ENCODE measurements at regions of chr5 and their contacts with region 1.

Region 1: DNA sequence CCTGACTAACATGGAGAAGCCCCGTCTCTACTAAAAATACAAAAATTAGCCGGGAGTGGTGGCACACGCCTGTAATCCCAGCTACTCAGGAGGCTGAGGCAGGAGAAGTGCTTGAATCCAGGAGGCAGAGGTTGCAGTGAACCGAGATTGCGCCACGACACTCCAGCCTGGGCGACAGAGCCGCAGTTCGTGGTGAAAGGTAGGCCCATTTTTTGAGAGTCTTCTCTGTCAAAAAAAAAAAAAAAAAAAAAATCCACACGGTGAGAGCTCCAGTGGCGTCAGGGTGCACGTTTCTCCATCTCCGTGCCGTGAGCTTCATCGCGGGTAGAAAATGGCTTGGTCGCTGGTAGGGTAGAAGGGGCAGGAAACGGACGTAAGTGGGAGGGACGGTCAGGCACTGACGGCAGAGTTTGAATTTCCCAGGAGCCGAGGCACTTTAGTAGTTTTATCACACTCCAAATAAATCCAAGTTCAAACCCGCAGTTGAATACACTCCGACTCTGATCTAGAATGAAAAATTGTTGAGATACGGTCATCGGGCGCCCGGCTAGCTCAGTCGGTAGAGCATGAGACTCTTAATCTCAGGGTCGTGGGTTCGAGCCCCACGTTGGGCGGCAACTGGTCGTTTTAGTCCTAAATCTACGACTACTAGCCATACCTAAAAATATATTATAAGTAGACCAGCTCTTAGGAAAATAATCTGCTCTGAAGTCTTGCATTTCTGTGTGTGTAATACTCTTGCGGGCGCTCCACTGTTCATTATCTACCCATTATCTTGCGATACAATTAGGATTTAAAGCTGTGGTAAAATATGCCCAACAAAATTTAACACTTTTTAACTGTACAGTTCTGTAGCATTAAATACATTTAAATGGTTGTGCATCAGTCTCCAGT is 2.5 kb upstream of the TRIM7 start:
- DNase-seq: peak; percentile 49 to 80 (median 77)
- H3K4me3 ChIP-seq: peak overlapping the region; percentile 69
- H3K4me3 Mint-ChIP-seq: peak overlapping the region; percentile 86 to 98 (median 91)
- H3K27ac ChIP-seq: peak overlapping the region; percentile 24
- H3K27ac Mint-ChIP-seq: peak overlapping the region; percentile 84 to 98 (median 94)
- H3K4me1 ChIP-seq: peaks cover 28% of the 10 kb centered on the region
- H3K4me1 Mint-ChIP-seq: peaks cover 30 to 38% (median 36%) of the 10 kb centered on the region in 3 donors
- H3K27me3 ChIP-seq: no peaks in the 10 kb centered on the region
- H3K27me3 Mint-ChIP-seq: peaks cover 6 to 24% of the 10 kb centered on the region in 2 donors

Region 2: GRCh38 chr5:181121659-181122561 is 85.6 kb before region 1 on chr5:
- CTCF ChIA-PET with region 1: no interaction called
- POLR2A ChIA-PET with region 1: no interaction called
- DNase-seq: no peak
- H3K4me3 ChIP-seq: no peak overlapping the region
- H3K4me3 Mint-ChIP-seq: no peak overlapping the region
- H3K27ac ChIP-seq: no peak overlapping the region
- H3K27ac Mint-ChIP-seq: no peak overlapping the region
- H3K4me1 ChIP-seq: no peaks in the 10 kb centered on the region
- H3K4me1 Mint-ChIP-seq: no peaks in the 10 kb centered on the region
- H3K27me3 ChIP-seq: peaks cover 5% of the 10 kb centered on the region
- H3K27me3 Mint-ChIP-seq: peaks cover 49 to 87% of the 10 kb centered on the region in 2 donors

Region 3: DNA sequence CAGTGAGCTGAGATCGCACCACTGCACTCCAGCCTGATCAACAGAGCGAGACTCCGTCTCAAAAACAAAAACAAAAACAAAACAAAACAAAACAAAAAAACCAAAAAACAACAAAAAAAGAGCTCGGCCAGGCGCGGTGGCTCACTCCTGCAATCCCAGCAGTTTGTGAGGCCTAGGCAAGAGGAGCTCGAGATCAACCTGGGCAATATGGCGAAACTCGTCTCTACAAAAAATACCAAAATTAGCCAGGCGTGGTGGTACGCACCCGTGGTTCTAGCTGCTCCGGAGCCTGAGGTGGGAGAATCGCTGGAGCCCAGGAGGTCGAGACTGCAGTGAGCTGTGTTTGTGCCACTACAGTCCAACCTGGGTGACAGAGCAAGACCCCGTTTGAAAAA is 22.6 kb before region 1 on chr5:
- CTCF ChIA-PET with region 1: interaction called, 164 read pairs
- POLR2A ChIA-PET with region 1: interaction called, 168 read pairs
- DNase-seq: no peak
- H3K4me3 ChIP-seq: no peak overlapping the region
- H3K4me3 Mint-ChIP-seq: peak overlapping the region; percentile 85 to 95 (median 91)
- H3K27ac ChIP-seq: peak overlapping the region; percentile 59
- H3K27ac Mint-ChIP-seq: peak overlapping the region in 6 of 8 donors; percentile 15 to 97 (median 90)
- H3K4me1 ChIP-seq: peaks cover 4% of the 10 kb centered on the region
- H3K4me1 Mint-ChIP-seq: peaks cover 43 to 58% (median 54%) of the 10 kb centered on the region in 3 donors
- H3K27me3 ChIP-seq: no peaks in the 10 kb centered on the region
- H3K27me3 Mint-ChIP-seq: peaks cover 0 to 26% of the 10 kb centered on the region in 2 donors

Region 4: DNA sequence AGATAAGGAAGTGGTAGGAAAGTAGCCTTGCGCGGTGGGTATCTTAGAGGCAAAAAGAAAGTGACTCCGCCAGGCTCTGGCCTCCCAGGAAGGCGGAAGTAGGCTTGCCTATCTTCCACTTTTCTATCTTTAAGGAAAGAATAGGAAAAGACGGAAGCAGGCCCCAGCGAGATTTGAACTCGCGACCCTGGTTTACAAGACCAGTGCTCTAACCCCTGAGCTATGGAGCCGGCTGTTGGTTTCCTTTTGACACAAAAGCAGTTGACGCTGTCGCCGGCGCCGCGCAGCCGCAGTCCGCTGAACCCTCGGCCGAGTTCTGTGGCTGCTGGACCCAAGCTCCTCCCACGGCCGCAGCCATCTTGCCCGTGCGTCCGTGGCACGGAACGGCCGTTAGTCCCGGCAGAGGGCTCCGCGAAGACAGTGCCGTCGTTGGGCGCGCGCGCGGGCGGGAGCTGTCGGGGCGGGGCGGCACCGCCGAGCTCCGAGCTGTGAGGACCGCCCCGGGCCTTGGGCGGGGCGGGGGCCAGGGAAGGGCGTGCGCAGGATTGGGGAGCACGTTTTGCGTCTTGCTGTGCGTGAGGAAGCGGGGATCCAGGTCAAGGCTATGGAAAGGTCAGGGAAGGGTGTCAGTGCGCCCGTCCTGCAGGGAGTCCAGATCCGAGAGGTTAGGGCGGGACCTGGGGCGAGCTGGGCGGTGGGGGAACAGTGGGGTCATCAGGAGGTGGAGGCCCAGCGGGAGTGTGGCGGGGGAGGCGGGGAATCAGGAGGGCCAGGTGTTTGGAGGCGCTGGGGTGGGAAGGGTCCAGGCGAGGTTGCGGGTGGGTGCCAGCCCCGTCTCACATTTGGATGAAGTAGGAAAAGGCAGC is 15.7 kb before region 1 on chr5:
- CTCF ChIA-PET with region 1: interaction called, 164 read pairs
- POLR2A ChIA-PET with region 1: interaction called, 168 read pairs
- DNase-seq: peak; percentile 90 to 97 (median 95)
- H3K4me3 ChIP-seq: peak overlapping the region; percentile 100
- H3K4me3 Mint-ChIP-seq: peak overlapping the region; percentile 94 to 100 (median 97)
- H3K27ac ChIP-seq: peak overlapping the region; percentile 83
- H3K27ac Mint-ChIP-seq: peak overlapping the region; percentile 93 to 100 (median 97)
- H3K4me1 ChIP-seq: peaks cover 6% of the 10 kb centered on the region
- H3K4me1 Mint-ChIP-seq: peaks cover 27 to 47% (median 35%) of the 10 kb centered on the region in 3 donors
- H3K27me3 ChIP-seq: no peaks in the 10 kb centered on the region
- H3K27me3 Mint-ChIP-seq: peaks cover 0 to 36% of the 10 kb centered on the region in 2 donors

Region 5: GRCh38 chr5:181243512-181244343 is 36.3 kb after region 1 on chr5 and contains the start of gene RACK1:
- CTCF ChIA-PET with region 1: interaction called, 3 read pairs
- POLR2A ChIA-PET with region 1: interaction called, 13 read pairs
- DNase-seq: peak; percentile 83 to 93 (median 87)
- H3K4me3 ChIP-seq: peak within 1 kb of the TSS; percentile 95
- H3K4me3 Mint-ChIP-seq: peak within 1 kb of the TSS; percentile 94 to 99 (median 97)
- H3K27ac ChIP-seq: peak within 1 kb of the TSS; percentile 96
- H3K27ac Mint-ChIP-seq: peak within 1 kb of the TSS; percentile 96 to 99 (median 98)
- H3K4me1 ChIP-seq: peaks cover 64% of the 10 kb centered on the region
- H3K4me1 Mint-ChIP-seq: peaks cover 68 to 76% (median 70%) of the 10 kb centered on the region in 3 donors
- H3K27me3 ChIP-seq: no peaks in the 10 kb centered on the region
- H3K27me3 Mint-ChIP-seq: peaks cover 0 to 2% of the 10 kb centered on the region in 2 donors
- total RNA-seq, gene RACK1: 2,341 to 2,398 TPM

Region 6: DNA sequence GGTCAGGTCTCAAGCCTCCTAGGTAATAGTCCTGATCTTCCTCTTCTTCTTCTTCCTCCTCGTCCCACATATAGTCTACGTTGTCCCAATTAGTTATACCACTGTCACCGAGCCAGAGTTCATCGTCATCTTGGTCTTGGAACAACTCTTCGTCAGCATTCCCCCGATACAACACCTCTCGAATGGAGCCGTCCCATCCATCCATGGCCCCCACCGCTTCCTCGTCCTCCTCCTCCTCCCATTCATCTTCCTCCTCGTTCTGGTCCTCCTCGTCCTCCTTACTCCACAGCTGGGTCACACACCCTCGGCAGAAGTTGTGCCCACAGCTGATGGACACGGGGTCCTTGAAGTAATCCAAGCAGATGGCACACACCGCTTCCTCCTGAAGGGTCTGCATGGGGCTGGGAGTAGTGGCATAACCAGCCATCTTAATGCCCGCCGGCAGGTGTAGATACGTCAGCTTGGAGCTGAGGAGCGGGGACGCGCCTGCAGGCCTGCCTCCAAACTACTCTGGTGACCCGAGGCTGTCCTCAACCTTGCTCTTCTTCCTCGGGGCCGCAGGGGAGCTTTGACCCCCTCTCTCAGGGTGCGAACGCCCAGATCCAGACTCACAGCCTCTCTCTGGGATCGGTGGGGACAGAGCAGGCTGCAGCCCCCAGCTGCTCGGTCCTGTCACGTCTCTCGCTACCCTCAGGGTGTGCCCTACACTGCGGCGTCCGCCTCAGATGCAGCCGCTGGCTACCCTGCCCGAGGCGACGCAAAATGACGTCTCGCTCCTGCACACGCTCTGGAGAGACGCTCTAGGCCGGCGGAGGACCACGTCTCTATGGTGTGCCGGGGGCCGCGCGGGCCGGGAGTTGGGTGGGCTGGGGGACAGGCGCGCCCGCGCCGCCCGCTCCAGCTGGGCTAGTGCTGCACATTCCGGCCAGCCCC is 53.2 kb after region 1 on chr5 and contains the start of gene TRIM52:
- CTCF ChIA-PET with region 1: interaction called, 17 read pairs
- POLR2A ChIA-PET with region 1: interaction called, 19 read pairs
- DNase-seq: peak; percentile 83 to 95 (median 91)
- H3K4me3 ChIP-seq: peak within 1 kb of the TSS; percentile 99
- H3K4me3 Mint-ChIP-seq: peak within 1 kb of the TSS; percentile 97 to 99 (median 98)
- H3K27ac ChIP-seq: peak within 1 kb of the TSS; percentile 99
- H3K27ac Mint-ChIP-seq: peak within 1 kb of the TSS; percentile 95 to 99 (median 98)
- H3K4me1 ChIP-seq: peaks cover 51% of the 10 kb centered on the region
- H3K4me1 Mint-ChIP-seq: peaks cover 52 to 59% (median 56%) of the 10 kb centered on the region in 3 donors
- H3K27me3 ChIP-seq: no peaks in the 10 kb centered on the region
- H3K27me3 Mint-ChIP-seq: no peaks in the 10 kb centered on the region
- total RNA-seq, gene TRIM52: 14.1 to 17.1 TPM